Naive thymus-derived CD4-positive, alpha-beta T cell (primary cell): ENCODE measurements at regions of chr3 and their contacts with region 1.

Region 1: GRCh38 chr3:156554842-156555687 is at the start of gene SSR3:
- DNase-seq: peak; percentile 95 to 99 (median 98)
- ATAC-seq: peak; percentile 100
- H3K4me3 ChIP-seq: peak within 1 kb of the TSS; percentile 95
- H3K4me3 Mint-ChIP-seq: peak within 1 kb of the TSS; percentile 88 to 98 (median 97)
- H3K27ac ChIP-seq: peak within 1 kb of the TSS; percentile 85
- H3K27ac Mint-ChIP-seq: peak within 1 kb of the TSS; percentile 89 to 96 (median 92)
- H3K4me1 ChIP-seq: peaks cover 16% of the 10 kb centered on the region in 2 donors
- H3K4me1 Mint-ChIP-seq: peaks cover 29 to 57% (median 50%) of the 10 kb centered on the region in 7 donors
- H3K27me3 ChIP-seq: no peaks in the 10 kb centered on the region
- H3K27me3 Mint-ChIP-seq: no peaks in the 10 kb centered on the region
- total RNA-seq, gene SSR3: 56.0 to 158 (median 76.2) TPM

Region 2: GRCh38 chr3:155870133-155870944 is 684.7 kb before region 1 on chr3 and contains the start of gene GMPS:
- CTCF ChIA-PET with region 1: no interaction called
- POLR2A ChIA-PET with region 1: no interaction called
- intact Hi-C with region 1: loop called in 1 of 2 experiments (anchors 2 kb)
- DNase-seq: peak; percentile 87 to 98 (median 96)
- ATAC-seq: peak; percentile 97
- H3K4me3 ChIP-seq: peak within 1 kb of the TSS; percentile 90
- H3K4me3 Mint-ChIP-seq: peak within 1 kb of the TSS; percentile 92 to 100 (median 98)
- H3K27ac ChIP-seq: peak within 1 kb of the TSS; percentile 94
- H3K27ac Mint-ChIP-seq: peak within 1 kb of the TSS; percentile 89 to 97 (median 96)
- H3K4me1 ChIP-seq: peaks cover 8% of the 10 kb centered on the region in 2 donors
- H3K4me1 Mint-ChIP-seq: peaks cover 17 to 35% (median 26%) of the 10 kb centered on the region in 7 donors
- H3K27me3 ChIP-seq: no peaks in the 10 kb centered on the region
- H3K27me3 Mint-ChIP-seq: no peaks in the 10 kb centered on the region
- total RNA-seq, gene GMPS: 36.3 to 85.1 (median 45.4) TPM

Region 3: DNA sequence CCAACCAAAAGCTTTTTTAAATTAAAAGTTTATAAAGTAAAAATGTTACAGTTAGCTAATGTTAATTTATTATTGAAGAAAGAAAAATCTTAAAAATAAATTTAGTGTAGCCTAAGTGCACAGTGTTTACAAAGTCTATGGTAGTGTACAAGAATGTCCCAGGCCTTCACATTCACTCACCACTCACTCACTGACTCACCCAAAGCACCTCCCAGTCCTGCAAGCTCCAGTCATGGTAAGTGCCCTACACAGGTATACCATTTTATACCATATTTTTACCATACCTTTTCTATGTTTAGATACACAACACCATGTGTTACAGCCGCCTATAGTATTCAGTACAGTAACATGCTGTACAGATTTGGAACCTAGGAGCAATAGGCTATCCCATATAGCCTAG is 29.3 kb before region 1 on chr3:
- CTCF ChIA-PET with region 1: interaction called, 4 read pairs
- POLR2A ChIA-PET with region 1: interaction called, 7 read pairs
- intact Hi-C with region 1: loop called (anchors 1 to 2 kb)
- DNase-seq: no peak
- ATAC-seq: no peak
- H3K4me3 ChIP-seq: no peak overlapping the region
- H3K4me3 Mint-ChIP-seq: peak overlapping the region in 1 of 10 donors; percentile 20
- H3K27ac ChIP-seq: no peak overlapping the region
- H3K27ac Mint-ChIP-seq: peak overlapping the region in 1 of 9 donors; percentile 52
- H3K4me1 ChIP-seq: peaks cover 6 to 10% of the 10 kb centered on the region in 2 donors
- H3K4me1 Mint-ChIP-seq: peaks cover 5 to 24% (median 13%) of the 10 kb centered on the region in 7 donors
- H3K27me3 ChIP-seq: no peaks in the 10 kb centered on the region
- H3K27me3 Mint-ChIP-seq: peaks cover 10 to 54% (median 19%) of the 10 kb centered on the region in 5 donors

Region 4: GRCh38 chr3:156826144-156826895 is 271.3 kb after region 1 on chr3 and contains the start of gene LEKR1:
- CTCF ChIA-PET with region 1: no interaction called
- POLR2A ChIA-PET with region 1: no interaction called
- intact Hi-C with region 1: loop called in 1 of 2 experiments (anchors 2 kb)
- DNase-seq: peak; percentile 38 to 73 (median 59)
- ATAC-seq: peak; percentile 84
- H3K4me3 ChIP-seq: peak within 1 kb of the TSS; percentile 73
- H3K4me3 Mint-ChIP-seq: peak within 1 kb of the TSS; percentile 85 to 98 (median 96)
- H3K27ac ChIP-seq: peak within 1 kb of the TSS; percentile 80
- H3K27ac Mint-ChIP-seq: peak within 1 kb of the TSS; percentile 91 to 99 (median 97)
- H3K4me1 ChIP-seq: no peaks in the 10 kb centered on the region
- H3K4me1 Mint-ChIP-seq: peaks cover 7 to 43% (median 19%) of the 10 kb centered on the region in 7 donors
- H3K27me3 ChIP-seq: no peaks in the 10 kb centered on the region
- H3K27me3 Mint-ChIP-seq: peaks cover 0 to 6% (median 0%) of the 10 kb centered on the region in 5 donors
- total RNA-seq, gene LEKR1: 0.31 to 5.1 (median 1.2) TPM

Region 5: GRCh38 chr3:157136647-157137387 is 581.8 kb after region 1 on chr3:
- CTCF ChIA-PET with region 1: interaction called, 3 read pairs
- POLR2A ChIA-PET with region 1: interaction called, 22 read pairs
- intact Hi-C with region 1: loop called (anchors 1 kb)
- DNase-seq: no peak
- ATAC-seq: no peak
- H3K4me3 ChIP-seq: no peak overlapping the region
- H3K4me3 Mint-ChIP-seq: peak overlapping the region in 2 of 10 donors; percentile 65 to 80
- H3K27ac ChIP-seq: peak overlapping the region; percentile 14
- H3K27ac Mint-ChIP-seq: peak overlapping the region in 7 of 9 donors; percentile 5 to 91 (median 78)
- H3K4me1 ChIP-seq: peaks cover 6 to 31% of the 10 kb centered on the region in 2 donors
- H3K4me1 Mint-ChIP-seq: peaks cover 3 to 65% (median 21%) of the 10 kb centered on the region in 7 donors
- H3K27me3 ChIP-seq: no peaks in the 10 kb centered on the region
- H3K27me3 Mint-ChIP-seq: no peaks in the 10 kb centered on the region